ENCODE measurements at regions of chr7 and their contacts with region 1.

Region 1: GRCh38 chr7:74417419-74417971 is 36.2 kb upstream of the GTF2IRD1 start:
- DNase-seq: peak; percentile 35
- H3K4me3 Mint-ChIP-seq: no peak overlapping the region
- H3K27ac Mint-ChIP-seq: no peak overlapping the region
- H3K4me1 Mint-ChIP-seq: no peaks in the 10 kb centered on the region
- H3K27me3 Mint-ChIP-seq: no peaks in the 10 kb centered on the region

Region 2: GRCh38 chr7:74569501-74570075 is 152.1 kb after region 1 on chr7:
- intact Hi-C with region 1: loop called (anchors 2 kb)
- DNase-seq: peak; percentile 14
- H3K4me3 Mint-ChIP-seq: no peak overlapping the region
- H3K27ac Mint-ChIP-seq: peak overlapping the region; percentile 83
- H3K4me1 Mint-ChIP-seq: peaks cover 14% of the 10 kb centered on the region
- H3K27me3 Mint-ChIP-seq: no peaks in the 10 kb centered on the region